Transverse colon (tissue), 4 donors: ENCODE measurements at regions of chr3 and their contacts with region 1.

Region 1: DNA sequence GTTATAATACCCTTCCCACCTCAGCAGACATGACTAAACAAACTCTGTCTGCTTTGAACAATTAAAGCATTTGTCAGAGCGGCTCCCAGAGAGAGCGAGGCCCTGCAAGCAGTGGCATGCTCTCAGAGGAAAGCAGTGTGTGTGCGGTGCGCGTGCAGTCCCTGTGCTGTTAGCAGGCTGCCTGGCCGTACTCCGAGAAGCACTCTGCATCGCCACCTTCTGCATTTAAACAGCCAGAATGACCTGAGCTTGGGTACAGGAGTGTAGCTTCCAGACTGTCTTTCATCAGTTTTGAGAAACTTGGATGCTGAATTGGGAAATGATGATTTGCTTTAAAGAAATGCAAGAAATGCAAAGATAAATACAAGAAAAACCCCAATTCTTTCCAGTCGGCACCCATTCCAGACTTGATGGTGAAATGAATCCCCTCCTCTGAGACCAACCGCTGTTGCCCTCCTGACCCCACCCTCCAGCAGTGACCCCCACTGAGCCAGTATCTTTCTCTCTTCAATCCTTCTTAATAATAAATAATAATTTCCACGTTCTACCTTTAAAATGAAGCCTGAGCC is 113.5 kb downstream of the VGLL4 start:
- DNase-seq: no peak
- H3K4me3 ChIP-seq: no peak overlapping the region
- H3K27ac ChIP-seq: peak overlapping the region in 1 of 4 donors; percentile 37
- H3K4me1 ChIP-seq: peaks cover 0 to 7% (median 2%) of the 10 kb centered on the region in 4 donors
- H3K27me3 ChIP-seq: no peaks in the 10 kb centered on the region
- CTCF ChIP-seq: no peak
- EP300 ChIP-seq: no peak
- POLR2A ChIP-seq: no peak

Region 2: GRCh38 chr3:11495948-11496557 is 34.2 kb before region 1 on chr3:
- in situ Hi-C with region 1: no loop called
- intact Hi-C with region 1: loop called (anchors 1 kb)
- DNase-seq: no peak
- H3K4me3 ChIP-seq: no peak overlapping the region
- H3K27ac ChIP-seq: no peak overlapping the region
- H3K4me1 ChIP-seq: peaks cover 8 to 11% (median 9%) of the 10 kb centered on the region in 4 donors
- H3K27me3 ChIP-seq: no peaks in the 10 kb centered on the region
- CTCF ChIP-seq: no peak
- EP300 ChIP-seq: no peak
- POLR2A ChIP-seq: no peak

Region 3: GRCh38 chr3:12395349-12396012 is 865.2 kb after region 1 on chr3:
- in situ Hi-C with region 1: no loop called
- intact Hi-C with region 1: no loop called
- DNase-seq: no peak
- H3K4me3 ChIP-seq: no peak overlapping the region
- H3K27ac ChIP-seq: peak overlapping the region; percentile 27 to 72 (median 47)
- H3K4me1 ChIP-seq: peaks cover 20 to 54% (median 25%) of the 10 kb centered on the region in 4 donors
- H3K27me3 ChIP-seq: no peaks in the 10 kb centered on the region
- CTCF ChIP-seq: no peak
- EP300 ChIP-seq: no peak
- POLR2A ChIP-seq: no peak